CD8-positive, alpha-beta T cell (primary cell): ENCODE measurements at regions of chr2 and their contacts with region 1.

Region 1: GRCh38 chr2:8872821-8873432 is 35.5 kb upstream of the KIDINS220 start:
- DNase-seq: peak in 2 of 9 experiments; percentile 13 to 36
- ATAC-seq: no peak
- H3K4me3 ChIP-seq: no peak overlapping the region
- H3K4me3 Mint-ChIP-seq: no peak overlapping the region
- H3K27ac ChIP-seq: no peak overlapping the region
- H3K27ac Mint-ChIP-seq: no peak overlapping the region
- H3K4me1 ChIP-seq: no peaks in the 10 kb centered on the region
- H3K4me1 Mint-ChIP-seq: no peaks in the 10 kb centered on the region
- H3K27me3 ChIP-seq: no peaks in the 10 kb centered on the region
- H3K27me3 Mint-ChIP-seq: peaks cover 2% of the 10 kb centered on the region
- CTCF ChIP-seq: peak; percentile 53

Region 2: DNA sequence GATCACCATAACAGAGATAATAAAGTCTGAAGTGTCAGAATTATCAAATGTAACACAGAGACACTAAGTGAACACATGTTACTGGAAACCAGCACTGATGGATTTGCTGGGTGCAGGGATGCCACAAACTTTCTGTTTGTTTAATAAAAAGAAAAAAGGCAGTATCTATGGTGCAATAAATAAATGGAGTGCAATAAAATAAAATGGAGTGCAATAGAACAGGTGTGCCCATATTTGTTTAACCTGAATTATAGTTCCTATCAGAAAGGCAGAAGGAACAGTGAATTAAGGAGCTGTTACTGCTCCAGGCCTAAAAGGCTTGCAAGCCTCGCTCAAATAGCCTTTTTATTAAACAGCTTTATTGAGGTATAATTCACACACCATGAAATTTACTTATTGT is 45.5 kb after region 1 on chr2:
- CTCF ChIA-PET with region 1: no interaction called
- POLR2A ChIA-PET with region 1: no interaction called
- intact Hi-C with region 1: no loop called
- DNase-seq: no peak
- ATAC-seq: no peak
- H3K4me3 ChIP-seq: no peak overlapping the region
- H3K4me3 Mint-ChIP-seq: no peak overlapping the region
- H3K27ac ChIP-seq: no peak overlapping the region
- H3K27ac Mint-ChIP-seq: no peak overlapping the region
- H3K4me1 ChIP-seq: no peaks in the 10 kb centered on the region
- H3K4me1 Mint-ChIP-seq: no peaks in the 10 kb centered on the region
- H3K27me3 ChIP-seq: no peaks in the 10 kb centered on the region
- H3K27me3 Mint-ChIP-seq: no peaks in the 10 kb centered on the region
- CTCF ChIP-seq: no peak

Region 3: DNA sequence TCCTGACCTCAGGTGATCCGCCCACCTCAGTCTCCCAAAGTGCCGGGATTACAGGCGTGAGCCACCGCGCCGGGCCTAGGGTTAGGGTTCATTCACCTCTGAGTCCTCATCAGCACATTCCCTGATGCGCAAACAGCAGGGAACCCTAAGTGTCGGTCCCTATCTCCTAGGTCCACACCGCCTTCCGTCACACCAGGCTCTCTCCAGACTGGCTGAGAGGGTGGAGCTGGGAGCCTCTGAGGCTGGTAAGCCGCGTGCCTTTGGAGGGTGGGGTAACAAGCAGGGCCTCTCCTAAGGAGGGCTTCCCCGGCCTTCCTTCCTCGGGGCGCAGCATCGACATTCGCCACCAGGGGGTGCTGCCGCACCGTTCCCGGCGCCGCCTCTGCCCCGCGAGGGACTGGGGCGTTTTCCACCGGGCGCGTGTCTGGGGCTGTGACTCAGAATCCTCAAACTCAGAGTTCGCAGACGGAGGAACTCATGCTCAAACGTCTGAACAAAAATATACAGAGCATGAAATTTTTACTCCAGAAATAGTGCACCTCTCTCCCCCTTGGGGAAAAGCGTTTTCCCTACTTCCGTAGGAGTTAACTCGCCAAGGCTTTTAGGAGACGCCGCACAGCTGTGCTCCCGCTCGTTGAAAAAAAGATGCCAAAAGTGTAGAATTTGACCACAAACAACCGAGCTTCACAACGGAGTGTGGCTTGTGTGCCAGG is 269.8 kb after region 1 on chr2:
- CTCF ChIA-PET with region 1: no interaction called
- POLR2A ChIA-PET with region 1: no interaction called
- intact Hi-C with region 1: loop called in 1 of 2 experiments (anchors 10 kb)
- DNase-seq: peak; percentile 57 to 88 (median 75)
- ATAC-seq: peak; percentile 95
- H3K4me3 ChIP-seq: peak overlapping the region in 1 of 2 experiments; percentile 8
- H3K4me3 Mint-ChIP-seq: peak overlapping the region; percentile 39
- H3K27ac ChIP-seq: no peak overlapping the region
- H3K27ac Mint-ChIP-seq: no peak overlapping the region
- H3K4me1 ChIP-seq: peaks cover 3% of the 10 kb centered on the region
- H3K4me1 Mint-ChIP-seq: peaks cover 6% of the 10 kb centered on the region
- H3K27me3 ChIP-seq: no peaks in the 10 kb centered on the region
- H3K27me3 Mint-ChIP-seq: peaks cover 21% of the 10 kb centered on the region
- CTCF ChIP-seq: peak; percentile 90